ENCODE measurements at regions of chr10 and their contacts with region 1.

Region 1: GRCh38 chr10:106625751-106626150 is 538.8 kb downstream of the SORCS1 start:
- DNase-seq: peak; percentile 77
- H3K4me3 ChIP-seq: no peak overlapping the region
- H3K27ac ChIP-seq: no peak overlapping the region
- H3K4me1 ChIP-seq: no peaks in the 10 kb centered on the region
- H3K27me3 ChIP-seq: no peaks in the 10 kb centered on the region
- CTCF ChIP-seq: no peak
- EP300 ChIP-seq: no peak
- POLR2A ChIP-seq: no peak

Region 2: GRCh38 chr10:106175760-106176377 is 449.9 kb before region 1 on chr10:
- intact Hi-C with region 1: no loop called
- DNase-seq: no peak
- H3K4me3 ChIP-seq: no peak overlapping the region
- H3K27ac ChIP-seq: no peak overlapping the region
- H3K4me1 ChIP-seq: no peaks in the 10 kb centered on the region
- H3K27me3 ChIP-seq: no peaks in the 10 kb centered on the region
- CTCF ChIP-seq: peak; percentile 52 to 62 (median 55)
- EP300 ChIP-seq: no peak
- POLR2A ChIP-seq: no peak

Region 3: GRCh38 chr10:106540645-106541044 is 85.1 kb before region 1 on chr10:
- intact Hi-C with region 1: no loop called
- DNase-seq: no peak
- H3K4me3 ChIP-seq: no peak overlapping the region
- H3K27ac ChIP-seq: no peak overlapping the region
- H3K4me1 ChIP-seq: no peaks in the 10 kb centered on the region
- H3K27me3 ChIP-seq: no peaks in the 10 kb centered on the region
- CTCF ChIP-seq: no peak
- EP300 ChIP-seq: no peak
- POLR2A ChIP-seq: no peak

Region 4: DNA sequence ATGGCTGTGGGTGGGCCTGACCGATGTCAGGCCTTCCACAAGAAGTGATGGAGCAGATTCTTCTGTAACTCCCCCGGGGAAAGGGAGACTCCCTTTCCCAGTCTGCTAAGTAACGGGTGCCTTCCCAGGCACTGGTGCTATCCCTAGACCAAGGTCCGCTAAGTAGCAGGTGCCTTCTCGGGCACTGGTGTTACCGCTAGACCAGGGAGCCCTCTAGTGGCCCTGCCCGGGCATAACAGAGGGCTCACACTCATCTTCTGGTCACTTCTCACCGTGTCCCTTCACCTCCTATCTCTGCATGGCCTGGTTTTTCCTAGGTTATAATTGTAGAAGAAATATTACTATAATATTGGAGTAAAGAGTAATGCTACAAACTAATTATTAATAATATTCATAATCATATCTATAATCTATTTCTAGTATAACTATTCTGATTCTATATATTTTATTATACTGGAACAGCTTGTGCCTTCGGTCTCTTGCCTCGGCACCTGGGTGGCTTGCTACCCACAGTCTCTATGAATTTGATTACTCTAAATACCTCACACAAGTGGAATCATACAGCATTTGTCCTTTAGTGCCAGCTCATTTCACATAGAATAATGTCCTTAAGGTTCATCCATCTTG is 1918.9 kb after region 1 on chr10:
- intact Hi-C with region 1: loop called (anchors 10 kb)
- DNase-seq: no peak
- H3K4me3 ChIP-seq: no peak overlapping the region
- H3K27ac ChIP-seq: no peak overlapping the region
- H3K4me1 ChIP-seq: peaks cover 0 to 4% (median 0%) of the 10 kb centered on the region in 4 donors
- H3K27me3 ChIP-seq: no peaks in the 10 kb centered on the region
- CTCF ChIP-seq: peak; percentile 72 to 92 (median 84)
- EP300 ChIP-seq: no peak
- POLR2A ChIP-seq: no peak